ENCODE measurements at regions of chr14 and their contacts with region 1.

Region 1: GRCh38 chr14:88013750-88014349 is 8.9 kb downstream of the GPR65 start:
- DNase-seq: peak; percentile 8
- H3K4me3 ChIP-seq: no peak overlapping the region
- H3K27ac ChIP-seq: no peak overlapping the region
- H3K27me3 ChIP-seq: no peaks in the 10 kb centered on the region
- CTCF ChIP-seq: peak; percentile 91

Region 2: DNA sequence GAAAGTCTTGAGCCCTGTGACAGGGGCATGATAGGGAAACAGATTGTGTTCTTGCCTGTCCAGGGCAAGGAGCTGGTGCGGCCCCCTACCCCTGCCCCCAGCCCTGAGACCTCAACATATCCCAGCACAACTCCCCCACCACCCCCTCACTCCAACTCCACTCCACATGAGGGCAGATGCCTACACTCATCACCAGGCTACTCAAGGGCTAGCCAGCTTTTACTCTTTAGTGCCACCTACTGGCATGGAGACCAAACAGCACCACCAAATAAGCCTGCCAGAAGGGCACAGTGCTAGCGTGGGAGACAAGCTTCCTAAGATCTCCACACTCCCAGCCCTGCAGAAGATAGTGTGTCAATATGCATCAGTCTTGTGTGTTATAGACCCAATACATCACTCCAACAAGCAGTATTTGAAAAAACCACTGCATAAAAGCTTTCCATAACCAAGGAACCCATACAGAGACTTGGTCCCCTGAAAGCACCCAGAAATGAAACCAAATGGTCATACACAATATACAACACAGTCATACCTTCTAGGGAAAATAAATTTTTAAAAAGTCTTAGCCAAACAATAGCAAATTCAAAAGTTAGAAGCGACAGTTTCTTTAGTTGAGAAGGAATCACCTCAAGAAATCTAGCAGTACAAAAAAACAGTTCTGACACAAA is 154.8 kb after region 1 on chr14:
- CTCF ChIA-PET with region 1: interaction called, 13 read pairs
- POLR2A ChIA-PET with region 1: no interaction called
- DNase-seq: no peak
- H3K4me3 ChIP-seq: no peak overlapping the region
- H3K27ac ChIP-seq: no peak overlapping the region
- H3K27me3 ChIP-seq: no peaks in the 10 kb centered on the region
- CTCF ChIP-seq: peak; percentile 63

Region 3: GRCh38 chr14:88380405-88380804 is 366.6 kb after region 1 on chr14:
- CTCF ChIA-PET with region 1: interaction called, 15 read pairs
- POLR2A ChIA-PET with region 1: no interaction called
- DNase-seq: no peak
- H3K4me3 ChIP-seq: no peak overlapping the region
- H3K27ac ChIP-seq: no peak overlapping the region
- H3K27me3 ChIP-seq: peaks cover 4% of the 10 kb centered on the region
- CTCF ChIP-seq: peak; percentile 42

Measured in AG04450 (cell line).